PC-9 (cell line): ENCODE measurements at regions of chr9 and their contacts with region 1.

Region 1: DNA sequence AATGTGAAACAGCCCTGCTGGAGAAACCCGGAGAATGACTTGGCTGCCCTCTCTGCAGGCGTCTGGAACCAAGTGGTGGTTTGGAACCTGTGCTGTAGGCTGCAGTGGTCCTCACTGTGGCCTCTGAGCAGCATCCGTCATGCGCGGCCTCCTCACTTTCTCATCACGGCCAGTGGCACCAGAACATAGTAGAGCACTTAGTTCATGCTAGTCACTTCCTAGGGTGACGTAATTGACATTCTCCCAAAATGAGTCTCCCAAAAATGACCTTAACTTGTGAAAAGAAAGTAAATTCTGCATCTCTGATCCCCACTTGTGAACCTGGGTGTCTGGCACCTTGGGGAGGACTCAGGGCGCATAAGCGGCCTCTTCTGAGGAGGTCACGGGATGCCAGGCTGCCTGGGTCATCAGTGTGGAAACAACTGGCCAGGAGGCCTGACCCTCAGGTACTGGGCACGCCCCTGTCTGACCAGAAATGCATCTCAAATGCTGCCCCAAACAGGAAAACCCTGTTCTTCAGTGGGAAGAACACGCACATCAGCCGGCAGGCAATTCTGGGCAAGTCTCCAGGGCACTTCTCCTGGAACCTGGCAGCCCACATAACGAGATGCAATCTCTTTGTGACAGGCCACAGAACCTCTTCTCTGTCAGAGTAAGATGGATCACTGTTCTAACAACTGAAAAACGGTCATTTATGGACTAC is 36.6 kb upstream of the SPTLC1 start:
- DNase-seq: peak; percentile 96 to 97
- H3K4me3 ChIP-seq: peak overlapping the region; percentile 11; the same call in 1 of the 2 replicates
- H3K27ac ChIP-seq: peak overlapping the region; percentile 67
- H3K4me1 ChIP-seq: peaks cover 48% of the 10 kb centered on the region
- H3K27me3 ChIP-seq: no peaks in the 10 kb centered on the region
- CTCF ChIP-seq: no peak

Region 2: DNA sequence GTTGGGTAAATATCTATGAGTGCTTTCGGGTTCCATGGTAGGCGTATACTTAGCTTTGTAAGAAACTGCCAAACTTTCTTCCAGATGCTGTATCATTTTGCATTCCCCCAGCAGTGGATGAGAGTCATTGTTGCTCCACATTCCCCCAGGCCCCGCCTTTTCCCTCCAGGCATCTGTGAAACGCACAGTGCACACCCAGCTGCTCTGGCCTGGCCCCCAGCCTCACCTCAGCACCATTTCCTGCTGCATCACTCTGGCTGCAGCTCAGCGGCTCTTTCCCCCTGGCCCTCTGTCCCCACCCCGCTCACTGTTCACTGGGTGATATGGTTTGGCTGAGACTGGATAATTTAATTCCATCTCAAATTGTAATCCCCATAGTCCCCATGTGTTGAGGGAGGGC is 40.0 kb after region 1 on chr9:
- CTCF ChIA-PET with region 1: no interaction called
- POLR2A ChIA-PET with region 1: no interaction called
- intact Hi-C with region 1: loop called (anchors 2 kb)
- DNase-seq: peak in 1 of 2 experiments; percentile 75
- H3K4me3 ChIP-seq: no peak overlapping the region
- H3K27ac ChIP-seq: no peak overlapping the region
- H3K4me1 ChIP-seq: peaks cover 9% of the 10 kb centered on the region
- H3K27me3 ChIP-seq: no peaks in the 10 kb centered on the region
- CTCF ChIP-seq: no peak

Region 3: GRCh38 chr9:92206488-92206887 is 54.6 kb after region 1 on chr9:
- CTCF ChIA-PET with region 1: interaction called, 10 read pairs
- POLR2A ChIA-PET with region 1: no interaction called
- intact Hi-C with region 1: no loop called
- DNase-seq: no peak
- H3K4me3 ChIP-seq: no peak overlapping the region
- H3K27ac ChIP-seq: peak overlapping the region; percentile 9; the same call in 1 of the 2 replicates
- H3K4me1 ChIP-seq: no peaks in the 10 kb centered on the region
- H3K27me3 ChIP-seq: no peaks in the 10 kb centered on the region
- CTCF ChIP-seq: no peak

Region 4: GRCh38 chr9:93575796-93576257 is 1424.0 kb after region 1 on chr9:
- CTCF ChIA-PET with region 1: no interaction called
- POLR2A ChIA-PET with region 1: no interaction called
- intact Hi-C with region 1: loop called (anchors 5 kb)
- DNase-seq: peak in 1 of 2 experiments; percentile 58
- H3K4me3 ChIP-seq: peak overlapping the region; percentile 87
- H3K27ac ChIP-seq: no peak overlapping the region
- H3K4me1 ChIP-seq: peaks cover 14% of the 10 kb centered on the region
- H3K27me3 ChIP-seq: no peaks in the 10 kb centered on the region
- CTCF ChIP-seq: no peak